ENCODE measurements at regions of chr3 and their contacts with region 1.

Region 1: DNA sequence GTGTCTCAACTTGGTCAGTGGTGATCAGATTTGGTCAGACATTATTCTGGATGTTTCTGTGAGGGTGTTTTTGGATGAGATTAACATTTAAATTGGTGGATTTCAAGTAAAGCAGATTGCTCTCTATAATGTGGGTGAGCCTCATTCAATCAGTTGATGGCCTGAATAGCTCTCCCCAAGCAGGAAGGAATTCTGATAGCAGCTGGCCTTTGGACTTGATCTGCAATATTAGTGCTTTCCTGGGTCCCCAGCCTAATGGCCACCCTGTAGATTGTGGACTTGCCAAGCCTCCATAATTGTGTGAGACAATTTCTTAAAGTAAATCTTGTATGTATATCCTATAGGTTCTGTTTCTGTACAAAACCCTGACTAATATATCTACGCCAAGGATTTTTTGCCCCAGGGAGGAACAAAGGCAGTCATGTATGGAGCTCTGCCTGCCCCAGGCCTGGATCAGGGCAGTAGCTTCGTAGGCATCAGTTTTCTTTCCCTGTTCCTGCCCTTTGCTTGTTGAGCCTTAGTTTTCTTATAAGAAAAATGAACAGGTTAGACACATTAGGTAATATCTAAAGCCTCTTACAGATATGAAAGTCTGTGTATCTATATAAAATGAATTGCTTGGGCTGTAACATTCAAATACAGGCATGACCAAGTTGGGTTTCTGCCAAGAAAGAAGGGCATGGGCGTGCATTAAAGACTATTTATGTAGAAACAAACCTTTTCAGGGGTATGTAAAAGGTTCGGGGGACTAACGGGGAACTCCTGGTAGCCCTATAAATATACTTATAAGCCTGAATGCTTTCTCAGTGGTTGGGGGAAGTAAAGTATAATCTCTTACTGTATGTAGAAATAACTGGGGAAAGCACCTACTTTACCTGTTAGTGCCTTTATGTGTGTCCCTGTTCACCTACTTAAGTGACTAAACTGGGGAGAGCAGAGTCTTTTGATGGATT is 154.2 kb upstream of the TBL1XR1 start:
- DNase-seq: peak; percentile 76
- H3K4me3 ChIP-seq: peak overlapping the region; percentile 44
- H3K27ac ChIP-seq: peak overlapping the region; percentile 82
- H3K4me1 ChIP-seq: peaks cover 81% of the 10 kb centered on the region
- CTCF ChIP-seq: no peak

Region 2: DNA sequence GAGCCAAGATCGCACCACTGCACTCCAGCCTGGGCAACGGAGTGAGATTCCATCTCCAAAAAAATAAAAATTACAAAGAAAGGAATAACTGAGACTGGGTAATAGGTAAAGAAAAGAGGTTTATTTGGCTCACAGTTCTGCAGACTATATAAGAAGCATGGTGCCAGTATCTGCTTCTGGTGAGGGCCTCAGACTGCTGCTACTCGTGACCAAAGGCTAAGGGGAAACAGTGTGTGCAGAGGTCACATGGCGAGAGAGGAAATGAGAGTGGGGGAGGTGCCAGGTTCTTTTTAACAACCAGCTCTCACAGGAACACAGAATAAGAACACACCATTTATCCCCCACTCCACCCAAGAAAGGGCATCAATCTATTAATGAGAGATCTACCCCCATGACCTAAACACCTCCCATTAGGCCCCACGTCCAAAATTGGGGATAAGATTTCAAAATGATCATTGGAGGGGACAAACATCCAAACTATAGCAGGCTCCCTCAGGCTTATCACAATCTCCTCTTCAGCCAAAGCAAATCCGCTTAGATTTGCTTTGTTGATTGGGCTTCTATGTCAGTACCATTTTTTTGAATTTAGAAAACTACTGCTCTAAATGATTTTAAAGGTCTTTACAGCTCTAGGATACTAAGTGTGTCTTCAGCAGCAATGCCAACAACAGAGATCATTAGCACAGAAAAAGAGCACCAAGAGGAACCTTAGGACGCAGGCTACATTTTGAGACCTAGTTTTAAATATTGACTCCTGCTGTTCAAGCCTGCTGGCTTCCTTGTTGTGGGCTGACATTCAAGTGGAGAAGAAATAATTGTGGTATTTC is 70.0 kb before region 1 on chr3:
- CTCF ChIA-PET with region 1: no interaction called
- POLR2A ChIA-PET with region 1: interaction called, 4 read pairs
- intact Hi-C with region 1: loop called (anchors 2 kb)
- DNase-seq: peak; percentile 82
- H3K4me3 ChIP-seq: peak overlapping the region; percentile 23
- H3K27ac ChIP-seq: peak overlapping the region; percentile 67
- H3K4me1 ChIP-seq: peaks cover 29% of the 10 kb centered on the region
- CTCF ChIP-seq: no peak

Region 3: GRCh38 chr3:177337541-177338331 is 13.7 kb before region 1 on chr3:
- CTCF ChIA-PET with region 1: interaction called, 3 read pairs
- POLR2A ChIA-PET with region 1: interaction called, 10 read pairs
- intact Hi-C with region 1: no loop called
- DNase-seq: no peak
- H3K4me3 ChIP-seq: no peak overlapping the region
- H3K27ac ChIP-seq: no peak overlapping the region
- H3K4me1 ChIP-seq: peaks cover 28% of the 10 kb centered on the region
- CTCF ChIP-seq: no peak

Region 4: DNA sequence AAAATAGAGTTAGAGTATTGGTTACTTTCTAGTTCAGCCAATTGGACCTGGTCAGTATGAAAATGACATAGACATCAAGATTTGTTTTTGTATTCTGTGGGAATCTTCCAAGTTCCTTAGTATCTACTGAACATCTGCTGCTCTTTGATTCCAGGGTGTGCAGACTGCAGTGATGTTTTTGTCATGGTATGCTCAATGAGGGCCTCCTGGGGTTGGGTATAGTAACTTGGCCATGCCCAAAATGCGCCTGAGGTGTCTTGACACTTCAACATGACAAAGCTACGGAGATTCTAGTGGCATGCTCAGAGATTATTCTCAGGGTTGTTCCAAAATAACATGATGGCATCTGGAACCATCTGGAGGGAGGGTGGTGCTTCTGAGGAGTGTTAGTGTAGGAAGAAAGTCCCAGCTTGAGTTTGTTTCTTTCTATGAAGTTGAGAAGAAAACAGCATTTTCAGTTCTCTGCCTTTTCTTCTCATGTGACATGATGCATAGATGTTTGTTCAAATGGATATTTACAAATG is 159.3 kb after region 1 on chr3:
- CTCF ChIA-PET with region 1: no interaction called
- POLR2A ChIA-PET with region 1: no interaction called
- intact Hi-C with region 1: no loop called
- DNase-seq: no peak
- H3K4me3 ChIP-seq: no peak overlapping the region
- H3K27ac ChIP-seq: no peak overlapping the region
- H3K4me1 ChIP-seq: no peaks in the 10 kb centered on the region
- CTCF ChIP-seq: no peak

Measured in OCI-LY7 (cell line).